ENCODE measurements at regions of chr1 and their contacts with region 1.

Region 1: GRCh38 chr1:214637722-214638458 is 34.9 kb downstream of the CENPF start:
- DNase-seq: peak; percentile 22
- CTCF ChIP-seq: peak; percentile 50

Region 2: DNA sequence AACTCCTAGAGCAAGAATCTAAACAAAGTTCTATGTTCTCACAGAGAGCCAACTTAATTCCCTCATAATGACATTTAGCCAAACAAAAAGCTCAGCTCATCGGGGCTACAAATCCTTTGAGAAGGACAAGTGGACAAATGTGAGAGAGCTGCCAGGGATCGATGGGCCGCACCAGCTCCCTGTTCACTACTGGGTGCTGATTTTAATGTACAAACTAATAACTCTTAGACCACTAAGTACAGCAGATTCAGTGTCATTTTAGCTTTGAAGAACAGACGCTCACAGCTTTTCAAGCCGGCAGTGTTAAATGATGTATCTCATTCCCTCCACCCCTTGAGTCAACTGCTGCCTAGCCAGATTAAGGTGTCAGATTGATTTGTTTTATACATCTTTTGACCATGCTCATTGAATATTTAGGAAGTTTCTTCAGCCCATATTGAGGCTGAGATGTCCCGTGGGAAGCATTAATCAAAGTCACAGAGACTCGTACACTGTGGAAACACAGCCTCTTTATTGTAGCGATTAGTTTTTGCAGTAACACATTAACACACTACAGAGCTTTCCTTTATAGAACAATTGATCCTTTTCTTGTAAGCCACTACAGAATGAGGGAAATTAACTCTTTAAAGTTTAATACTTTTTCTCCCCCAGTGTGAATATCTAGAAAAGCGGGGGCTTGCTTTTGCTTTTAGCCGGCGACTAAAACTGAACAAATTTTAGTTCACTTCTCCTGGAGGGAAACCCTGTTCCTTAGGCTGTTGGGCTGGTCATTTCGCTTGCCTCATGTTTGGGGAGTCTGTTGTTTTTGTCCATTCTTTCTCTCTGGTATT is 628.9 kb before region 1 on chr1:
- CTCF ChIA-PET with region 1: no interaction called
- POLR2A ChIA-PET with region 1: no interaction called
- DNase-seq: no peak
- CTCF ChIP-seq: no peak

Region 3: DNA sequence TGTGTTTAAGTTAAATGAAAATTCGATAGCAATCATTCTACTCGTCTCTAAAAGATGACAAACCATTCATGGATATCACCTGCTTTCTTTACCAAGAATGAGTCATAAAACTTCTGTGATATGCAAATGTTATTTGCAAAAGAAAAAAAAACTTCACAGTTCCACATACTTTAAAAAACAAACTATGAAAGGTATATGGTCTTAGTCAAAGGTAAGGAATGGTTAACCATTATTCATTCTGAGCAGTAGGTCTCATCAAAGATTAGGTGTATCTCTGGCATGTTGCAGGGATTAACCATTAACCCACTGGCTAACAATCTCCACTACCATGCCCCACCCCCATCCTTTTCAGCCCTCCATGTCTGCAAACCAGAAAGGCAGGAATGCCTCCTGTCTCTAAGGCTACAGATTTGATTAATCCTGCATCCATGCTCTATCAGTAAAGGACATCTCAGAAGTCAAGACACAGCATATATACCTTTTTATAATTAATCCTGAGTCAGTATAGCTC is 130.9 kb before region 1 on chr1:
- CTCF ChIA-PET with region 1: no interaction called
- POLR2A ChIA-PET with region 1: no interaction called
- DNase-seq: no peak
- CTCF ChIP-seq: no peak

Region 4: GRCh38 chr1:214648801-214649200 is 10.9 kb after region 1 on chr1:
- CTCF ChIA-PET with region 1: interaction called, 54 read pairs
- POLR2A ChIA-PET with region 1: no interaction called
- DNase-seq: no peak
- CTCF ChIP-seq: no peak

Region 5: GRCh38 chr1:214660862-214661261 is 23.0 kb after region 1 on chr1:
- CTCF ChIA-PET with region 1: interaction called, 11 read pairs
- POLR2A ChIA-PET with region 1: no interaction called
- DNase-seq: no peak
- CTCF ChIP-seq: no peak